ENCODE measurements at regions of chr17 and their contacts with region 1.

Region 1: DNA sequence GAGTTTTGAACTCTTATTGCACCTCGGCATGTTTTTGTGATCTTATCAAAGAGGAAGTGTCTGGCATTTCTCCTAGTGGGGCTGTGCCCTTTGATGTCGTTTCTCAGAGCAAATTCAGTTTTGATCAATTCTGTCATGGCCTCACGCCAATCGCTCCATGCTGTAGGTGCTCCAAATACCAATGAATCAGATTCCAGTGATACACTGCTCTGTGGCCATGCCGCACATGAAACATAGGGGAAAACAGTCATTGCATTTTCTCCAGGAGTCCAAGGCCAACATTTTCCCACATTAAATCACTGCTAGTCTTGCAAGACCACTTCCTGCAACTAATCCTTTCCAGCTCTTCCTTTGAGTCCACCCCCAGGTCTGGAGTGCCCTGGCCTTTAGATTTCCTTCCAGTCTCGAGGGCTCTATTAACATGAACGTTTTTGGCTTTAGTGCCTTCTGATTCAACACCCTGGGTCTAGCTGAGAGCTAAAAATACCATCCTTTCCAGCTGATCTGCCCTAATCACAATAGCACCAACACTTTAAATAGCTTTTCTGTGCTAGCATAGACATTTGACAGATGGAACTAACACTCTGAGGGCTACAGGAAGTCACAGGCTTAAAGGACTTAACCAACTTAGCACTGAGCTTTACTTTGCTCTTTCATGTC is 18.2 kb upstream of the RASL10B start:
- DNase-seq: peak; percentile 98
- H3K4me3 ChIP-seq: no peak overlapping the region
- H3K27ac ChIP-seq: peak overlapping the region; percentile 51
- H3K4me1 ChIP-seq: peaks cover 15% of the 10 kb centered on the region
- H3K27me3 ChIP-seq: no peaks in the 10 kb centered on the region
- CTCF ChIP-seq: no peak
- POLR2A ChIP-seq: no peak

Region 2: DNA sequence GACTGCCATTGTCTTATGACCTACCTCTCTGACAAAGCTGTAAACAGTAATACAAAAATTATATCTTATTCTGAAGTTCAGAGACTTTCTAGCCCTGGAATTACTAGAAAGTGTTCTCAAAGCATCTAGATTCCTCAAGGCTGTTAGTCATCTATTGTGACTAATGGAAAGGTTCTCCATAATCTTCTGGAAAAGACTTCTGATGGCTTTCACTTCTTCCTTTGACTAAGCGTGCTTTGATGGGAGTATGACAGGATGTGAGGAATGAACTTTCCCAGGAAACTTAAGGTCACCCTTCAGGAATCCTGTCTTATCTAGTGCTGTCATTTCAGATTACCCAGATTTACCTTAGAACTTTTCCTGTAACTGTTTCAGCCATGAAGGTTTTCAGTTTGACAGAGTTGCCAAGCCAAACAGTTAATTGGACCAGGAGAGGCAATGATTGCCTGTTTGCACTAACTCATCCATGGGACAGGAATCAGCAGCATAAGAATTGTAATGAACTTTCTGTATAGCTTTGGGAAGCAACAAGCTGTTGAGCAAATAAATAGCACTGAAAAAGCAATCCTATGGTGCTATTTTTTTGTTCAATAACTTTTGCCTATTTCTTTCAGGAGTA is 82.6 kb before region 1 on chr17:
- CTCF ChIA-PET with region 1: no interaction called
- POLR2A ChIA-PET with region 1: no interaction called
- dilution Hi-C with region 1: no loop called
- intact Hi-C with region 1: loop called (anchors 2 kb)
- DNase-seq: peak; percentile 79
- H3K4me3 ChIP-seq: no peak overlapping the region
- H3K27ac ChIP-seq: peak overlapping the region; percentile 41
- H3K4me1 ChIP-seq: peaks cover 17% of the 10 kb centered on the region
- H3K27me3 ChIP-seq: no peaks in the 10 kb centered on the region
- CTCF ChIP-seq: no peak
- POLR2A ChIP-seq: peak; percentile 36

Region 3: DNA sequence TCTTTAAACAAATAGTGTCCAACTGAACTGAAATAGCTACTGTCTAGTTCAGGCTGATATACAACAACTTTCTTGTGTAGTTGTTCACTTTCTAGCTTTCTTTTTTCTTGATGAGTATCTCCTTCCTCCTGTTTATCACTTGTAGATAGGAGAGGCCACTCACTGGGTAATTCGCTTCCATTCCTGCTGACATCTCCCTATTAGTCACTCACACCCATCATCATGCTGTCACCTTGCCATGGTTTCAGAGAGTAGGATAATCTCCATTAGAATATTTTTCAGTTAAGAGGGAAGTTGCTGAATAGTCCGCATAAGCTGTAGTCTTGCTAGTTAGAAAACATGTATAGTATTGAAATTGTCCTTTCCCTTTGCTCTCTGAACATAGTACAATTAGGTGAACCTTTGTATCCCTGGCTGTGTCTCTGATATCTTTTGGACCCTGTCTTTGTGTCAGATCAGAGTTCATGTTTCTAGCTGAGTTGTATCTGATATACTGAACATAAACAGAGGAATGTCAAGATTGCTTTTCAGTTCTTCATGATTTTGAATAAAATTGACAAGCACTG is 46.1 kb before region 1 on chr17:
- CTCF ChIA-PET with region 1: no interaction called
- POLR2A ChIA-PET with region 1: no interaction called
- dilution Hi-C with region 1: no loop called
- intact Hi-C with region 1: no loop called
- DNase-seq: peak; percentile 3
- H3K4me3 ChIP-seq: no peak overlapping the region
- H3K27ac ChIP-seq: no peak overlapping the region
- H3K4me1 ChIP-seq: no peaks in the 10 kb centered on the region
- H3K27me3 ChIP-seq: no peaks in the 10 kb centered on the region
- CTCF ChIP-seq: no peak
- POLR2A ChIP-seq: no peak

Measured in endothelial cell of umbilical vein (primary cell).